Activated T-helper 2 cell treated with anti-CD3 and anti-CD28 coated beads, Interferon-gamma antibody, Interleukin-2, Interleukin-4, amounts not matched to agents 10 μg/mL and 5 μg/mL and 100 μg/mL, durations not matched to agents 14 hours and 24 hours and 36 hours (primary cell): ENCODE measurements at regions of chr7 and their contacts with region 1.

Region 1: DNA sequence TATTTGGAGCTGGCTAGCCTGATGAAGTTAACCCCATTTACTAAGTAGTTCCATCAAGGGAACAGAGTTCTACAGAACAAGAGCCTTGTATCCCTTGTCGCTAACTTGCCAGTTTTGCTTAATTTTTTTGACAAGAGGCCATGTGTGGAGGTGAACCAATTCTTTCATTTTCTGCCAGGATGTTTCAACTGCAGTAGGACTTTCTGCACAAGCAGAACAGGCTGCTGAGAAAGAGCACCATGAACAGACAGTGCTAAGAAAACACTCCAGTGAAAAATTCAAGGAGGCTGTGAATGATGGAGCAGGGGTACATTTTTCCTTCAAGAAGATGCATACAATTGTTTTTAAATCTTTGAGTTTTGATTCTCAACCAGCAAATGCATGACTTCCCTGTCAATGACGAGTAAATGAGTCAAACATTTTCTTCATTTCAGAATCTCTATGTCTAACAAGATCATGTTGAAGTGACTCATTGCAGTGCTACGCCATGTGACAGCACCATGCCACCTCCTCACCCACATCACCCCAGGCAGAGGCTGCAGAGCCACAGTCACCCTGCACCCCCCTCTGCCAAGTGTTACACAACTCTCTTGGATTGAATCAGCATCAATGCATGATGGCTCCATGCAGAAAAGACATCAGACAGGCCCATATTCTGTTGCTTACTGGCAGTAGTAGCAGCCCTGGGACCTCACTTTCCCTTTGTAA is 193.1 kb downstream of the COBL start:
- DNase-seq: peak; percentile 38
- H3K4me3 Mint-ChIP-seq: no peak overlapping the region
- H3K27ac Mint-ChIP-seq: peak overlapping the region; percentile 90
- H3K4me1 Mint-ChIP-seq: peaks cover 33% of the 10 kb centered on the region
- H3K27me3 Mint-ChIP-seq: peaks cover 2% of the 10 kb centered on the region

Region 2: GRCh38 chr7:50349963-50350944 is 773.2 kb before region 1 on chr7:
- intact Hi-C with region 1: loop called (anchors 10 kb)
- DNase-seq: peak; percentile 80
- H3K4me3 Mint-ChIP-seq: peak overlapping the region; percentile 49
- H3K27ac Mint-ChIP-seq: peak overlapping the region; percentile 91
- H3K4me1 Mint-ChIP-seq: peaks cover 96% of the 10 kb centered on the region
- H3K27me3 Mint-ChIP-seq: no peaks in the 10 kb centered on the region

Region 3: DNA sequence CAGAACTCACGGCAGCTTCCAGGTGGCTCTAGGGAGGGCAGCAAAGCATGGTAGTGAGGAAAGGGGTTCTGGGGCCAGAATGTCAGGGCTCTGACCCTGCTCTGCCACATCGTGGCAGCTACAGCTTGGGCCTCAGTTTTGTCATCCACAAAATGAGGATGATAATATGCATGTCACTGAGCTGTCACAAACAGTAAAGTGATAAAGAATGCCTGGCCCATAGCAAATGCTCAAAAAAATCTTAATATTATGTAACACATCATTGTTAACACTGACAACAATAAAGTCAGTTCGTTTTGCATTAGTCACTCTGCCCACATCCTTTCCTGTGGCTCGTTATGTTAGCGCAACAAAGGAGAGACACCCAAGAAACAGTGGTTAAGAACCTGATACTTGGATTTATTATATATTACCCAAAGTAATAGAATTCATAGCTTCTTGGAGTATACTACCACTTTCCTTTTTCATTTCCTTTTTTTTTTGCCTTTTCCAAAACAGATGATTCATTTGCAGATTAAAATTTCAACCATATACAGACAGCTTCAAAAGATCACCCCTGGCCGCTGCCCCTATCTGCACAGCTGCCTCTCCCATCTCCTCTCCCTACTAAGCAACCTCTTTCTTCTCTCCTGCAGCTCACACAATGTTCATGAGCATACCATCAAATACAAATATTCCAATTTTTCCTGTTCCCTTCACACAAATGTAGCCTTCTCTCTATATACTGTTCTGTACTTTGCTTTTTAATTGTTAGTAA is 512.8 kb before region 1 on chr7:
- intact Hi-C with region 1: loop called (anchors 5 kb)
- DNase-seq: peak; percentile 47
- H3K4me3 Mint-ChIP-seq: no peak overlapping the region
- H3K27ac Mint-ChIP-seq: no peak overlapping the region
- H3K4me1 Mint-ChIP-seq: peaks cover 45% of the 10 kb centered on the region
- H3K27me3 Mint-ChIP-seq: no peaks in the 10 kb centered on the region

Region 4: GRCh38 chr7:50832744-50833143 is 290.7 kb before region 1 on chr7:
- intact Hi-C with region 1: loop called (anchors 1 kb)
- DNase-seq: peak; percentile 44
- H3K4me3 Mint-ChIP-seq: no peak overlapping the region
- H3K27ac Mint-ChIP-seq: peak overlapping the region; percentile 8
- H3K4me1 Mint-ChIP-seq: peaks cover 42% of the 10 kb centered on the region
- H3K27me3 Mint-ChIP-seq: peaks cover 34% of the 10 kb centered on the region

Region 5: DNA sequence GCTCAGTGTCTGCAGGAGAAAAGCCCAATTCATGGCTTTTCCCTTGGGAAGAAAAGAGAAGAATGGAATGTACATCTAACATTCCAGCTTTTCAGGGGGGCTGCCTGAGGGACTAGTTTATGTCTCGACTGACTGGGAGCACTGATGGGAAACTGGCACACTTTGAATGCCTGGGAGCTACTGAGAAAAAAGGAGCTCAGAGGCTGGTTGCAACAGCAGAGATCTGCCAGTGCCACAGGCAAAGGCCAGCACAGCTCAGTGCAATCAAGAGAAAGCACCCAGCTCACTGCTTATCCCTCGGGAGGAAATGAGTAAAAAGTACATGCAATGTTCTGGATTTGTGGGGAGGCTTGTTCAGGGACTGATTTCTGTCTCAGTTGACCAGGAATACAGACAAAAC is 33.1 kb before region 1 on chr7:
- intact Hi-C with region 1: no loop called
- DNase-seq: no peak
- H3K4me3 Mint-ChIP-seq: no peak overlapping the region
- H3K27ac Mint-ChIP-seq: no peak overlapping the region
- H3K4me1 Mint-ChIP-seq: no peaks in the 10 kb centered on the region
- H3K27me3 Mint-ChIP-seq: peaks cover 11% of the 10 kb centered on the region